WTC11 (cell line): ENCODE measurements at regions of chr12 and their contacts with region 1.

Region 1: GRCh38 chr12:56468216-56469006 is at the start of gene SPRYD4:
- DNase-seq: peak; percentile 90
- ATAC-seq: peak; percentile 77
- H3K4me3 Mint-ChIP-seq: peak within 1 kb of the TSS; percentile 93
- H3K27ac Mint-ChIP-seq: peak within 1 kb of the TSS; percentile 98
- H3K4me1 Mint-ChIP-seq: peaks cover 10% of the 10 kb centered on the region
- H3K27me3 Mint-ChIP-seq: peaks cover 5% of the 10 kb centered on the region
- CTCF ChIP-seq: no peak
- total RNA-seq, gene SPRYD4: 2.8 to 4.2 TPM (median 3.1 TPM) in 3 replicates

Region 2: GRCh38 chr12:56377310-56377988 is 91.0 kb before region 1 on chr12:
- CTCF ChIA-PET with region 1: interaction called, 17 read pairs
- POLR2A ChIA-PET with region 1: no interaction called
- DNase-seq: no peak
- ATAC-seq: peak; percentile 90
- H3K4me3 Mint-ChIP-seq: no peak overlapping the region
- H3K27ac Mint-ChIP-seq: peak overlapping the region; percentile 47; the same call in 1 of the 2 replicates
- H3K4me1 Mint-ChIP-seq: peaks cover 7% of the 10 kb centered on the region
- H3K27me3 Mint-ChIP-seq: no peaks in the 10 kb centered on the region; the same call in none of the 2 replicates
- CTCF ChIP-seq: no peak

Region 3: GRCh38 chr12:56411781-56412639 is 56.4 kb before region 1 on chr12:
- CTCF ChIA-PET with region 1: interaction called, 15 read pairs
- POLR2A ChIA-PET with region 1: no interaction called
- DNase-seq: no peak
- ATAC-seq: no peak
- H3K4me3 Mint-ChIP-seq: no peak overlapping the region
- H3K27ac Mint-ChIP-seq: no peak overlapping the region; the same call in 1 of the 2 replicates
- H3K4me1 Mint-ChIP-seq: no peaks in the 10 kb centered on the region
- H3K27me3 Mint-ChIP-seq: no peaks in the 10 kb centered on the region
- CTCF ChIP-seq: no peak

Region 4: GRCh38 chr12:56448860-56449621 is 19.4 kb before region 1 on chr12 and contains the start of gene TIMELESS:
- CTCF ChIA-PET with region 1: interaction called, 35 read pairs
- POLR2A ChIA-PET with region 1: interaction called, 6 read pairs
- DNase-seq: peak; percentile 88
- ATAC-seq: peak; percentile 92
- H3K4me3 Mint-ChIP-seq: peak within 1 kb of the TSS; percentile 82
- H3K27ac Mint-ChIP-seq: peak within 1 kb of the TSS; percentile 97
- H3K4me1 Mint-ChIP-seq: peaks cover 41% of the 10 kb centered on the region
- H3K27me3 Mint-ChIP-seq: peaks cover 5% of the 10 kb centered on the region
- CTCF ChIP-seq: no peak
- total RNA-seq, gene TIMELESS: 60.9 to 67.1 TPM (median 64.9 TPM) in 3 replicates

Region 5: GRCh38 chr12:56749359-56749758 is 280.9 kb after region 1 on chr12:
- CTCF ChIA-PET with region 1: no interaction called
- POLR2A ChIA-PET with region 1: no interaction called
- DNase-seq: no peak
- ATAC-seq: no peak
- H3K4me3 Mint-ChIP-seq: no peak overlapping the region
- H3K27ac Mint-ChIP-seq: no peak overlapping the region
- H3K4me1 Mint-ChIP-seq: peaks cover 17% of the 10 kb centered on the region
- H3K27me3 Mint-ChIP-seq: peaks cover 2% of the 10 kb centered on the region; the same call in 1 of the 2 replicates
- CTCF ChIP-seq: no peak